GM18951 (cell line): ENCODE measurements at regions of chr5 and their contacts with region 1.

Region 1: DNA sequence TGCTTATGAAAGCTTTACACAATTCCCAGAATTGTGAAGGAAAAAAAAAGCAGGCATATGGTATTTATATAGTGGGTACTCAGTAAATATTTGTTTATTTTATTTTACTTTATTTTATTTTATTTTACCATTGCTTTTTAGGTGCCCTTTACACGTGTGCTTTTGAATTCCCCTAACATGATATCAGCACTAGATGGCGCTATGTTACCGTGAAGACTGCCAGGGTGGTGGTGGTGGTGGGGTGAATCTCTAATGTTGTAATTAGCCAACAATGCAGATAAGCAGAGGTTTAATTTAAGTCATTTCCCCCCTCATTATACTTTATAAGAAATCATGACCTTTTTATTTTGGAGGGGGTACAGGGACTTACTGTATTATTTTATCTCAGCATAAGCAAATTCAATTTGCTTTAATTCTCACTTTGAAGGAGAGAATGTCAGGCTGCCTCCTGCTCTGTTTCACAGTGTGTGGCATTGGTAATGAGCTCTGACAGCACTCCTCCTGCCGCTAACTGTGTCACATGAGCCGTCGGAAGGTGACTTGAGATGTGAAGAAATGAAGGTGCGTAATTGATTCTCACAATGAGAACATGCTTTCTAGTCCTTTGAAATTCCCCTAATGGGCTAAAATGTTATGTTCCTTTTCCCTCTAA is 165.6 kb downstream of the YTHDC2 start:
- POLR2A ChIP-seq: no peak

Region 2: GRCh38 chr5:114449860-114450421 is 770.9 kb after region 1 on chr5:
- in situ Hi-C with region 1: loop called (anchors 25 kb)
- POLR2A ChIP-seq: no peak